ENCODE measurements at regions of chr12 and their contacts with region 1.

Region 1: DNA sequence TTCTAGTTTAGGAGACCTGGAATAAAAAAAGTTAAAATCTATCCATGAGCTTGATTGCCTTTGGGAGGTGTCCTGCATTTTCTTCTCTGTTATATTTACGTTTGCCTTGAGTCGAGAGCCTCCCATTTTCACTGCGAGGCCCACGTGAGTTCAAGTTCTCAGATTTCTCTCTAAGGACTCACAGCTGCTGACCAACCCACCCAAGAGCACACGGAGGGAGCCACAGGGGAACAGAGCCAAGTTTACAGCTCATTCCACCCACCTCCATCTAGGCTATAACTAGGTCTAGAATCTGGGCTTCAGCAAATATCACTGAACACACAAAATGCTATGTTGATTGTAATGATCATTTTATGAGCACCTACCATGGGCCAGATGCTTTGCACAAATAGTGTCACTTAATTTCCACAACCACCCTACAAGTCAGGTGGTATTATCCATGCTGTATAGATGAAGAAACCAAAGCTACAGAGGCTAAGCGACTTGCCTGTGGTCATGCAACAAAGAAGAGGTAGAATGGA is 16.7 kb downstream of the ALDH1L2 start:
- DNase-seq: no peak
- CTCF ChIP-seq: no peak

Region 2: GRCh38 chr12:105013892-105014291 is 53.7 kb before region 1 on chr12:
- CTCF ChIA-PET with region 1: no interaction called
- POLR2A ChIA-PET with region 1: no interaction called
- DNase-seq: no peak
- CTCF ChIP-seq: no peak

Region 3: GRCh38 chr12:105053116-105053572 is 14.4 kb before region 1 on chr12:
- CTCF ChIA-PET with region 1: interaction called, 16 read pairs
- POLR2A ChIA-PET with region 1: no interaction called
- DNase-seq: peak; percentile 57
- CTCF ChIP-seq: peak; percentile 94

Region 4: GRCh38 chr12:105078678-105079570 is 11.4 kb after region 1 on chr12:
- CTCF ChIA-PET with region 1: interaction called, 12 read pairs
- POLR2A ChIA-PET with region 1: no interaction called
- DNase-seq: no peak
- CTCF ChIP-seq: no peak

Region 5: DNA sequence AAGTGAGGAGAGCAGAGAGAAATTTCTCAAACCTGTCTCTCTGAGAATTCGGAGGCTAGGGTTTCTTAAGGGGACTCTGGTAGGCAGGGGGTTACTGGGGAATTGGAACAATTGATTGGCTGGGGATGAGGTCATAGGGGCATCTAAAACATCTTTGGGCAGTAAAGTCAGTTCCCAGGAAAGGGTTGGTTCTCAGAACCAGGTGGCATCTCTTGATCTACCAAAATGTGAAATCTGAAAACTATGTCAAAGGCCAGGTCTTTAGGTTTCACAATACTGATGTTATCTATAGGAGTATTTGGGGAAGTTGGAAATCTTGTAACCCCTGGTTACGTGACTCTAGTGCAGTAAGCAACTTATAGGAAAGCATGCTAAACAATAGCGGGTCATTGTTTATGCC is 269.8 kb after region 1 on chr12:
- CTCF ChIA-PET with region 1: no interaction called
- POLR2A ChIA-PET with region 1: no interaction called
- DNase-seq: no peak
- CTCF ChIP-seq: no peak